HCT116 (cell line): ENCODE measurements at regions of chr2 and their contacts with region 1.

Region 1: DNA sequence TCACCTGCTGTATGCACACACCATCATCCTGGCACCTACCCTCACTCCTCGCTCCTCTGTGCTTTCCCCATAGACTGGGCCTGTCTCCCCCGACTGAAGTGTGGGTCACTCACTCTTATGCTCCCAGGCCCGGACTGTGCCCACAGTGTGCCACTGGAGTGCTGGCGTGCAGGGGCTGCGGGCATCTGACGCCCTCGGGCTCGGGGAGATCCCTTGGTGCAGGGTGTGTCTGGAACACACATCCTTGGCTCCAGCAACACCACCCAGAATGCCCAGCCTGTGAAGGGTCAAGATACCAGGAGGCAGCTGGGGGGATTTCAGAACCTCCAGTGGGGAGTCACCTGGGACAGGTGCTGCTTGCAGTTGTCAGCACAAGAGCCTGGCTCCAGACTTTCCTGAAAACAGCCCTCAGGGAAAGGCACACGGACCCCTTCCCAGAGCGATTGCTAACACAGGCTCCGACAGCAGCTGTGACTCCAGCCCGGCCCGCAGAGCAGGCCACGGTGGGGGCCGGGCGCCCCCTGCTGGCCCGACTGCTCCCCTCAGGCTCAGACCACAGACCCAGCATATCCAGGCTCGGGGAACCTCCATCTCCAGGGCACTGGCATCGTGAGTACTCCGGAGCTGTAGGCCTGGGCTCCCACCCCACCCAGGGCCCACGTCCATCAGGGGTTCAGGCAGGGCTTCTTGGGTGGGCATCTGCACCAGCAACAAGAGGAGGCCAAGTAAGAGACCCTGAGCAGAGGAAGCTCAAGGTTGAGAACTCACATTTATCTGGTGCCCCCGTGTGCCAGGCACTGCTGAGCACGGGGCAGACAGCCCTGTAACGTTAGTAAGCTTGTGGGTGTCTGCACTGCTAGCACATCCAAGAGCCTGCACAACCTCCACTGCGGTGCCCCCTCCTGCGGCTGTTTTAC is 8.6 kb downstream of the HS1BP3 start:
- DNase-seq: peak; percentile 16
- ATAC-seq: peak; percentile 99
- H3K4me3 ChIP-seq: no peak overlapping the region
- H3K27ac ChIP-seq: no peak overlapping the region
- H3K4me1 ChIP-seq: no peaks in the 10 kb centered on the region; a peak in 1 of 4 replicates
- H3K27me3 ChIP-seq: no peaks in the 10 kb centered on the region
- CTCF ChIP-seq: peak; percentile 86 to 96 (median 90)
- POLR2A ChIP-seq: no peak
- RAD21 ChIP-seq: peak; percentile 94

Region 2: GRCh38 chr2:19955544-19956422 is 686.5 kb before region 1 on chr2:
- CTCF ChIA-PET with region 1: no interaction called
- POLR2A ChIA-PET with region 1: no interaction called
- RAD21 ChIA-PET with region 1: no interaction called
- intact Hi-C with region 1: loop called (anchors 5 kb)
- DNase-seq: peak; percentile 65
- ATAC-seq: peak; percentile 100
- H3K4me3 ChIP-seq: no peak overlapping the region
- H3K27ac ChIP-seq: no peak overlapping the region
- H3K4me1 ChIP-seq: no peaks in the 10 kb centered on the region
- H3K27me3 ChIP-seq: no peaks in the 10 kb centered on the region
- CTCF ChIP-seq: peak; percentile 77 to 99 (median 82)
- POLR2A ChIP-seq: no peak
- RAD21 ChIP-seq: peak; percentile 97

Region 3: GRCh38 chr2:20378792-20379519 is 263.4 kb before region 1 on chr2:
- CTCF ChIA-PET with region 1: interaction called, 17 read pairs
- POLR2A ChIA-PET with region 1: no interaction called
- RAD21 ChIA-PET with region 1: no interaction called
- intact Hi-C with region 1: no loop called
- DNase-seq: peak; percentile 38
- ATAC-seq: peak; percentile 99
- H3K4me3 ChIP-seq: no peak overlapping the region
- H3K27ac ChIP-seq: no peak overlapping the region
- H3K4me1 ChIP-seq: peaks cover 0 to 4% of the 10 kb centered on the region in 2 experiments; a peak in 1 of 4 replicates
- H3K27me3 ChIP-seq: no peaks in the 10 kb centered on the region
- CTCF ChIP-seq: peak; percentile 65 to 82 (median 78)
- POLR2A ChIP-seq: no peak
- RAD21 ChIP-seq: peak; percentile 79

Region 4: GRCh38 chr2:20396356-20397000 is 245.8 kb before region 1 on chr2:
- CTCF ChIA-PET with region 1: interaction called, 19 read pairs
- POLR2A ChIA-PET with region 1: no interaction called
- RAD21 ChIA-PET with region 1: interaction called in 1 of 2 experiments, 3 read pairs
- intact Hi-C with region 1: loop called (anchors 1 kb)
- DNase-seq: no peak
- ATAC-seq: no peak; the same call in 1 of the 2 replicates
- H3K4me3 ChIP-seq: no peak overlapping the region
- H3K27ac ChIP-seq: no peak overlapping the region
- H3K4me1 ChIP-seq: peaks cover 0 to 19% of the 10 kb centered on the region in 2 experiments; a peak in 2 of 4 replicates
- H3K27me3 ChIP-seq: no peaks in the 10 kb centered on the region
- CTCF ChIP-seq: no peak
- POLR2A ChIP-seq: no peak
- RAD21 ChIP-seq: no peak

Region 5: DNA sequence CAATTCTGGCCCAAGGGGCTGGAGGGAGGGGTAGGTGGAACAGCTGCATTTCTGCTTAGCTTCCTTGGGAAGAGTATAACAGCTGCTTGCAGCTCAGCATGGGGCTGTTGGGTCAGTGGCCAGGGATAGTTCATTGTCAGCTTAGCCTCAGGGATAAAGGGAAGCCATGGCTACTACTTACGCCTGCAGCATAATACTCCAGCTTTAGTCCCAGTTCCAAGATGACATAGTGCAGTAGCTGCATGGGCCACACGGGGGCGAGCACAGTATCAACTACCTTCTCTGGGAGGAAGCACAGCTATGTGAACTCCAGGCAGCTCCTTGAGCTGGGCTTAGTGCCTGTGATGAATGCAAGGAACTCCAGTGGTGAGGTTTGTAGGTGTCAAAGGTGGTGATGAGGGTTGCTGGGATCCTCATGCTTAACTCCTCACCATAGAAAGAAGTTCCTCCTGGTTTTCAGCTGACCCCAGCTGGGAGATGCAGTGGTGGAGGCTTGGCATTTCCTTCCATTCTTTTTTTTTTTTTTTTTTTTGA is 230.9 kb before region 1 on chr2:
- CTCF ChIA-PET with region 1: interaction called, 25 read pairs
- POLR2A ChIA-PET with region 1: no interaction called
- RAD21 ChIA-PET with region 1: interaction called, 7 to 10 read pairs
- intact Hi-C with region 1: loop called (anchors 1 kb)
- DNase-seq: peak; percentile 61
- ATAC-seq: peak; percentile 100
- H3K4me3 ChIP-seq: no peak overlapping the region
- H3K27ac ChIP-seq: no peak overlapping the region
- H3K4me1 ChIP-seq: peaks cover 0 to 2% of the 10 kb centered on the region in 2 experiments; a peak in 1 of 4 replicates
- H3K27me3 ChIP-seq: no peaks in the 10 kb centered on the region
- CTCF ChIP-seq: peak; percentile 73 to 87 (median 82)
- POLR2A ChIP-seq: no peak
- RAD21 ChIP-seq: peak; percentile 77

Region 6: DNA sequence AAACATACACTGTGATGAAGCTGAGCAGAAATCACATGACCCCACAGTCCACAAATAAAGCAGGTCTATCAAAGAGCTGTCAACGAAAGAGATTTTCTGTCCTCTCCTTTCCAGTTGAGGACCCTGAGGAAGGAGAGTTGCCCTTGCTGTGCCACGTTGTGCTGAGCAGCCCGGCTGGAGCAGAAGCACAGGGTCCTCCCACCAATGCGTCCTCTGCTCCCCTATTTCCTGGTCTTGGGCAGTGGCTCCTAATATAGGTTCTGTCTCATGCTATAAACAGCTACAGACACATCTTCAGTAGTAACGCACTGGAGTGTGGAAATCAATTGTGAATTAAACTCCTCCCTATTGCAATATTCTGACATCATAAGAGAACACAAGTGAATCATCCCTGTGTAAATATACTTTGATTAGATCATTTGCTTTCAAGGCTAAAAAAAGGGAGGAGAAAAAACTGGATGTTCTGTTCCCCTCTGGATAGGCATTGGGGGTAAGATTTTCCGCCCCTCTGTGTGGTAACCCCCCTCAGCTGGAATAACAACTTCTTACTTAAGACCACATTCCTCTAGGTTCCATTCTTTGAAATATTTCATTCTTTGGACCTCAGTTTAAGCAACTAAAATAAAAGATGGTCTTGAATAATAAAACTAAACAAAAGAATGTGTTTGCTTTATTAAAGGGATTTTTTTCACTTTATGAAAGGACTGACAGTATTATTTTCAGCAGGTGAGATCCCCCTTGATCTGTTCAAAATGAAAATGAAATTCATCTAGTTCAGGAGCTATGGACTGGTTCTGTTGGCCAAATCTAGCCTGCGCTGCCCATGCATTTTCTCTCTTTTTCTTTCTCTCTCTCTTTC is 203.8 kb before region 1 on chr2:
- CTCF ChIA-PET with region 1: interaction called, 11 read pairs
- POLR2A ChIA-PET with region 1: interaction called, 8 read pairs
- RAD21 ChIA-PET with region 1: interaction called, 3 read pairs
- intact Hi-C with region 1: loop called (anchors 1 kb)
- DNase-seq: no peak
- ATAC-seq: 0 out of 2 replicates have a peak, but pooled peaks have one; percentile 1
- H3K4me3 ChIP-seq: peak overlapping the region; percentile 19 to 25
- H3K27ac ChIP-seq: no peak overlapping the region
- H3K4me1 ChIP-seq: peaks cover 26 to 43% of the 10 kb centered on the region in 2 experiments
- H3K27me3 ChIP-seq: no peaks in the 10 kb centered on the region
- CTCF ChIP-seq: no peak
- POLR2A ChIP-seq: no peak
- RAD21 ChIP-seq: no peak